ENCODE measurements at regions of chr17 and their contacts with region 1.

Region 1: DNA sequence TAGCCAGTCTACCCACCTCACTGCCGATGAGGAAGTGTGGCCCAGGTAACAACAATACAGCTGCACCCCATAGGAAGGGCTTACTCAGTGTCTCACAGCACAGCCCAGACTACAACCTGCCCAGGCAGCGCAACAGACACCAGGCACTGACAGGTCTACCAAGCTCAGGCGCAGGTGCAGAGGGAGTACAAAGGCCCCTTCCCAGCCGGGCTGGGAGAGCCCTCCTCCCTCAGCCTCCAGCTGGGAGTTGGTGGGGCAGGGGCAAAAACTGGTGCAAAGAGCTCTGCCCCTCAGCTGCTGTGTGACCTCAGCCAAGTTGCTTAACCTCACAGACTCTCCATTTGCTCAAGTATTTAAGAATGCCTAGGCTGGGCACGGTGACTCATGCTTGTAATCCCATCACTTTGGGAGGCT is 112.6 kb upstream of the LHX1 start:
- DNase-seq: no peak
- H3K4me3 ChIP-seq: no peak overlapping the region
- H3K27ac ChIP-seq: no peak overlapping the region
- H3K4me1 ChIP-seq: no peaks in the 10 kb centered on the region
- H3K27me3 ChIP-seq: peaks cover 6% of the 10 kb centered on the region
- CTCF ChIP-seq: no peak

Region 2: GRCh38 chr17:36657763-36658490 is 166.8 kb before region 1 on chr17:
- CTCF ChIA-PET with region 1: interaction called, 32 read pairs
- dilution Hi-C with region 1: no loop called
- in situ Hi-C with region 1: no loop called
- intact Hi-C with region 1: no loop called
- DNase-seq: no peak
- H3K4me3 ChIP-seq: peak overlapping the region in 1 of 3 experiments; percentile 3
- H3K27ac ChIP-seq: no peak overlapping the region
- H3K4me1 ChIP-seq: no peaks in the 10 kb centered on the region
- H3K27me3 ChIP-seq: peaks cover 18% of the 10 kb centered on the region
- CTCF ChIP-seq: no peak

Region 3: GRCh38 chr17:36877771-36878170 is 53.1 kb after region 1 on chr17:
- CTCF ChIA-PET with region 1: no interaction called
- dilution Hi-C with region 1: no loop called
- in situ Hi-C with region 1: no loop called
- intact Hi-C with region 1: loop called (anchors 5 kb)
- DNase-seq: no peak
- H3K4me3 ChIP-seq: no peak overlapping the region
- H3K27ac ChIP-seq: no peak overlapping the region
- H3K4me1 ChIP-seq: peaks cover 6% of the 10 kb centered on the region
- H3K27me3 ChIP-seq: no peaks in the 10 kb centered on the region
- CTCF ChIP-seq: no peak